Dendritic cell treated with granulocyte-macrophage colony-stimulating factor and Interleukin-4, amounts not matched to agents 40 ng/mL and 50 ng/mL, for 4 days (primary cell): ENCODE measurements at regions of chr9 and their contacts with region 1.

Region 1: DNA sequence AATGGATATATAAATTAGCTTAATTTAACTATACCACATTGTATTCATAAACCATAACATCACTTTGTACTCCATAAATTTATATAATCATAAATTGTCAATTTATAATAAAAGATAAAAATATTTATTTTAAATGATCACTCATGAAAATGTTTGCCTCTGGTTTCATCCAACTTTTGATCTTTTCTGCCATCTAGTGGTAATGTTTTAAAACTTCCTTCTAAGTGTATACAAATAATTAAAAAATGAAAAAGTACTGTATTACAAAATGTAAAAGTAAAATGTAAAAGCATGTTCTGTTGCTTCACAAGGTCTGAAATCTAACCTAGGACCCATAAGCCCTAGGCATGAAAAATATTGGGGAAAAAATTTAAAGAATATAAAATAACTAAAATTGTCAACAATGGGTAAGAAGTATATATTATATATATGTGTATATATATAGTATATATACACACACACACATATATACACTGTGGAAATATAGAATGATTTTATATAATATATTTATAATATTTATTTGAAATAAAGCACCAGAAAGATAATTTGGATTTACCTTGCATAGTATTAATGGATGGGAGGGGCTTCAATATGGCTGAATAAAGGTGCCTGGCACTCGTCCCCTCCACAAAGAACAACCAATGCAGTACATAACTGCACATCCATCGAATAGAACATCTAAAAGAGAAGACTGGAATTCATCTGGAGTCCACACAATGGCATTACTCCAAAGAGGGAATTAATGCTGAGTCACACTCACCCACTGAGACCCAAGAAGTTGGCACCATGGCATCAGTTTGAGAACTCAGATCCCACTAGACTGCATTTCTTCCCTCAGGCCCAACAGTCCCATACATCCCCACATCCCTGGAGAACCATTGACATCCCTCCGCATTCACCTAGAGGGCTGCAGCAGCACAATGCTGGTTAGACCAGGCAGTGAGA is 32.5 kb downstream of the ANXA1 start:
- H3K4me3 Mint-ChIP-seq: no peak overlapping the region
- H3K27ac Mint-ChIP-seq: no peak overlapping the region
- H3K4me1 Mint-ChIP-seq: no peaks in the 10 kb centered on the region
- H3K27me3 Mint-ChIP-seq: no peaks in the 10 kb centered on the region

Region 2: GRCh38 chr9:72931437-72931836 is 252.8 kb before region 1 on chr9:
- intact Hi-C with region 1: no loop called
- H3K4me3 Mint-ChIP-seq: no peak overlapping the region
- H3K27ac Mint-ChIP-seq: no peak overlapping the region
- H3K4me1 Mint-ChIP-seq: no peaks in the 10 kb centered on the region
- H3K27me3 Mint-ChIP-seq: no peaks in the 10 kb centered on the region

Region 3: DNA sequence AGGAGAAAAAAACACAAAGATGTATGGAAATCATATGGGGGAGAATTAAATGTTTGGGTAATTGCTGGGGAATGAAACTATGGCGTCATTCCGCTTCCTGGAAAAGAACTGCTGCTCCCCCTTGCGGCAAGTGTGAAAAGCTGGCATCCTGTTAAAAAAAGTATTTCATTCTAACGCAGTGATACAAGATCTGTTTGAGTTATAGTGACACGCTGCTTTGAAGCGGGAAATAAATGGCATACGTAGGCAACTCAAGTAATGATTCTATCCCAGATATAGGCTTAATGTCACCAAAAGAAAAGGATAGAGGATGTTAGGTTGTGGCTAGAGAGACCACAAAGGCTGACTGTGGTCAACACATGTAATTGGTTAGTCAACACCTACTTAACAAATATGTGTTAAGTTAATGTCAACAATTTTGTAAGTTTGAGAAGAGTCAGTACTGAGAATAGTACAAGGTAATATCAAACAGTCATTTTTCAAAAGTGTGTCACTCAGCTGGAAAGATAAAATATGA is 161.1 kb before region 1 on chr9:
- intact Hi-C with region 1: loop called (anchors 2 kb)
- H3K4me3 Mint-ChIP-seq: no peak overlapping the region
- H3K27ac Mint-ChIP-seq: no peak overlapping the region
- H3K4me1 Mint-ChIP-seq: no peaks in the 10 kb centered on the region
- H3K27me3 Mint-ChIP-seq: no peaks in the 10 kb centered on the region

Region 4: DNA sequence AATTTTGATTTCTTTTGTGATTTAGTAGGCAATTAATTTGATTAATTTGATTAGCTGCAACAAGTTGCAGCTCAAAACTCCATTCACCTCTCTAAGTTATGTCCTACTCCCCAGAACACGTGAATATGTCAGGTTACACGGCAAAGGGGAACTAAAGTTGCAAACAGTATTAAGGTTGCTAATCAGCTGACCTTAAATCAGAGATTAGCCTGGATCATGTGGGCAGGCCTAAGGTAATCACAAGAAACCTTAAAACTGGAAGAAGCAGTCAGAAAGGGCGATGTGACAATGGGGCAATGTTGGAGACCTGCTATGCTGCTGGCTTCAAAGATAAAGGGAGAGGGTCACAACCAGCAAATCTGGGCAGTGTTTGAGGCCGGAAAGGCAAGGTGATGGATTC is 79.8 kb before region 1 on chr9:
- intact Hi-C with region 1: loop called (anchors 1 kb)
- H3K4me3 Mint-ChIP-seq: no peak overlapping the region
- H3K27ac Mint-ChIP-seq: no peak overlapping the region
- H3K4me1 Mint-ChIP-seq: no peaks in the 10 kb centered on the region
- H3K27me3 Mint-ChIP-seq: no peaks in the 10 kb centered on the region

Region 5: GRCh38 chr9:73133921-73134407 is 50.2 kb before region 1 on chr9:
- intact Hi-C with region 1: no loop called
- H3K4me3 Mint-ChIP-seq: no peak overlapping the region
- H3K27ac Mint-ChIP-seq: no peak overlapping the region
- H3K4me1 Mint-ChIP-seq: peaks cover 38% of the 10 kb centered on the region
- H3K27me3 Mint-ChIP-seq: no peaks in the 10 kb centered on the region

Region 6: GRCh38 chr9:73219985-73220626 is 35.9 kb after region 1 on chr9:
- intact Hi-C with region 1: no loop called
- H3K4me3 Mint-ChIP-seq: no peak overlapping the region
- H3K27ac Mint-ChIP-seq: peak overlapping the region; percentile 76
- H3K4me1 Mint-ChIP-seq: peaks cover 37% of the 10 kb centered on the region
- H3K27me3 Mint-ChIP-seq: no peaks in the 10 kb centered on the region

Region 7: DNA sequence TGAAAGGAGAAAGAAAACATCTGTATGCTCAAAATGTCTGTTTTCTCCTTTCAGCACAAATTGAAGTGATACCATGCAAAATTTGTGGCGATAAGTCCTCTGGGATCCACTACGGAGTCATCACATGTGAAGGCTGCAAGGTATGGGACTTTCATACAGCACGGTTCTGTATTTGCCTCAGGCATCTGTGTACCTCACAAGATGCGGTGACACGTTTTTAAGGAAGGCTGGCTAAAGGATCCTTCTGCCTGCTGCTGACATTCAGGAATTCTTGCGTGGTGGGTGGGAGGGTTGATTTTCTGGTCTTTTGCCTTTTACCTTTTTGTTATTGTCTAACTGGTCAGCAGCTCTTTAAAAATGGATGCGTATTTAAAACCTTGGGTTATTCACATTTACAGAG is 1446.0 kb after region 1 on chr9:
- intact Hi-C with region 1: no loop called
- H3K4me3 Mint-ChIP-seq: no peak overlapping the region
- H3K27ac Mint-ChIP-seq: no peak overlapping the region
- H3K4me1 Mint-ChIP-seq: no peaks in the 10 kb centered on the region
- H3K27me3 Mint-ChIP-seq: no peaks in the 10 kb centered on the region